AG04450 (cell line): ENCODE measurements at regions of chr13 and their contacts with region 1.

Region 1: GRCh38 chr13:100235311-100235901 is 146.5 kb downstream of the PCCA start:
- DNase-seq: no peak
- H3K4me3 ChIP-seq: no peak overlapping the region
- H3K27ac ChIP-seq: no peak overlapping the region
- H3K27me3 ChIP-seq: no peaks in the 10 kb centered on the region
- CTCF ChIP-seq: peak; percentile 64

Region 2: DNA sequence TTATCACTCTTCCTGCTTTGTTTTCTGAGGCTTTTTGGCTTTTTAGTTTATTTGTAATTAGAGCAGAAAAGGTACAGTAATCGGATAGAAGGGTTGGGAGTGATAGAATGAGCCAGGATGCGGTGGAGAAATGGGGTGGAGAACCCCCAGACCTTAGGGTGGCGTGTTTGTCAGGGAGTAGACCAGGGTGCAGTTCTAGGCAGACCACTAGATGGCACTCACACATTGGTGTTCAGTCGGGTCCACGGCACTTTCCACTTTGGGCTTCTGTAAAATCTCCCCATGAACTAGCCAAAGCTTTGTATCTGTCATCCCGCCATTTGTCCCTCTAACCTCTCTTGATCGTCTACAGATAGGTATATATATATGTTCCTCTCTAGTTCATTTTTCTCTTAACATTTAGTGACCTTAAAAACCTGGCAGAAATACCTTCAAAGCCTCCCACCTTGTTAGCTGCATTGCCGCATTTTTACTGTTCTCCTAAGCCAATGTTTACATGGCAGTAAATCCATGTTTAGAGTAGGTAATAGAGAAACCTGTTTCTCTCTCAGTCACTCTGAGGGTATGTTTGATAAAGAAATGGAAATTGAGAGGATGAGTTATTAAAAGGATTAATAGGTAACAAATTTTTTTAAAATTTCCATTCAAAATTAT is 579.2 kb before region 1 on chr13:
- CTCF ChIA-PET with region 1: interaction called, 10 read pairs
- POLR2A ChIA-PET with region 1: no interaction called
- DNase-seq: peak; percentile 18
- H3K4me3 ChIP-seq: no peak overlapping the region
- H3K27ac ChIP-seq: no peak overlapping the region
- H3K27me3 ChIP-seq: peaks cover 15% of the 10 kb centered on the region
- CTCF ChIP-seq: peak; percentile 94

Region 3: DNA sequence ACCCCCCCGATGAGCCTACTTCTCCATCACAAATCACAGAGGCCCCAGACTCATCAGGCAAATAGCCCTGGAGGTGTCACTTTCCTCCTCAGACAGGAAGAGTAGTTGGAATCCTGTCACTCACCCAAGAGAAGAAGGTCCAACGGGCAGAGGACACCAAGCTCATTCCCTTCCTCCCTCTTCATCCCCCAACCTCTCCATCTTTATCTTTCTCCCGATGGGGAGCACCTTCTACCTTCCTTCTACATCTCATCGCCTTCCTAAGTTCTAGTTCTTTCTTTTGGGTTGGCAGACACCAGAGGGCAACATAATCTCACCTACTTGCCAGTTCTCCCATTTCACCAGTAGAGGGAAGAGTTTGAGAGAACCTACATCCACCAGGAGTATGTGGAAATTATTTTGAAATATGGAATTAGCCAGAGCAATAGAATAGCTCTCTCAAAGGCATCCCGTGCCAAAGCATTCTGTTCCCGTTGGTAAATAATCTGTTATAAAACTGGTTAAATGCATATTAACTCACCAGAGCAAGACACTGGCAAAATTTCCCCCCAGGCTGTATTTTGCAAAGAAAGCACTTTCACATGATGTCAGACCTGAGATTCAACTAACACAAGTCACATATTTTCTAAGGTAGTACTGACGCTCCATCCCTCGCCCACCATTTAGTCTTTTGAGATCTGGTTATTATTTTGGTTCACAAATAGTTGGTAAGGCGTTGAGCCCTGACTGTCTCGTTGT is 318.9 kb before region 1 on chr13:
- CTCF ChIA-PET with region 1: interaction called, 67 read pairs
- POLR2A ChIA-PET with region 1: no interaction called
- DNase-seq: peak; percentile 33
- H3K4me3 ChIP-seq: no peak overlapping the region
- H3K27ac ChIP-seq: no peak overlapping the region
- H3K27me3 ChIP-seq: peaks cover 11% of the 10 kb centered on the region
- CTCF ChIP-seq: peak; percentile 98

Region 4: DNA sequence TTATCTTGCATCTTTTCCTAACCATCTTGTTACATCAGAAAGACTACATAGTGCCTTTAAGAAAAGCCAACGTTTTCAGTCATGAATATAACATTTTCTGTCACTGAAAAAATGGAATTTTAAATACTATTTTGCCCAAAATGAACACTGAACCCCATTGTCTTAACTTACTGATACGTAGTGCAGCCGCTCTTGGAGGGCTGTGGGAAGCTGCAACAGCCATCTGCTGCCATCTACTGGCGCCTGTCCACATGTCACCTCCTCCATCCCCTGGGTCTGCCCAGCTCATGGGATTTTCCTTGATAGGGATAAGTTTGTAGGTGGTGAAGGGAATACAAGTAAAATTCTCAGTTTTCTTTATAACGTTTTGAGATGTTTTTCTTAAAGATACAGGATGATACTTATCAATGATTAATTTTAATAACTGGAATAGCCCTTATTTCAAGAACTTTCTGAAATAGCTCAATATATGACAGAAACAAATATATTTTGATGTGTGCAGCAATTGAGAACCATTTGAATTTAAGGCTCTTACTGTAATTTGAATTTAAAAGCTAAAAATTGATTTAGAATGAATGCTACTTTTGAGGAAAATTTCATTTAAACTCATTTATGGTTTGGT is 279.5 kb after region 1 on chr13:
- CTCF ChIA-PET with region 1: interaction called, 13 read pairs
- POLR2A ChIA-PET with region 1: no interaction called
- DNase-seq: peak; percentile 42
- H3K4me3 ChIP-seq: no peak overlapping the region
- H3K27ac ChIP-seq: no peak overlapping the region
- H3K27me3 ChIP-seq: no peaks in the 10 kb centered on the region
- CTCF ChIP-seq: peak; percentile 99